Gastrocnemius medialis (tissue), 4 donors: ENCODE measurements at regions of chr15 and their contacts with region 1.

Region 1: GRCh38 chr15:58182460-58183163 is 44.4 kb downstream of the AQP9 start:
- DNase-seq: no peak
- ATAC-seq: no peak
- H3K4me3 ChIP-seq: no peak overlapping the region
- H3K27ac ChIP-seq: no peak overlapping the region
- H3K4me1 ChIP-seq: no peaks in the 10 kb centered on the region
- H3K27me3 ChIP-seq: no peaks in the 10 kb centered on the region
- CTCF ChIP-seq: peak in 4 of 5 experiments; percentile 22 to 61 (median 40)
- POLR2A ChIP-seq: no peak

Region 2: DNA sequence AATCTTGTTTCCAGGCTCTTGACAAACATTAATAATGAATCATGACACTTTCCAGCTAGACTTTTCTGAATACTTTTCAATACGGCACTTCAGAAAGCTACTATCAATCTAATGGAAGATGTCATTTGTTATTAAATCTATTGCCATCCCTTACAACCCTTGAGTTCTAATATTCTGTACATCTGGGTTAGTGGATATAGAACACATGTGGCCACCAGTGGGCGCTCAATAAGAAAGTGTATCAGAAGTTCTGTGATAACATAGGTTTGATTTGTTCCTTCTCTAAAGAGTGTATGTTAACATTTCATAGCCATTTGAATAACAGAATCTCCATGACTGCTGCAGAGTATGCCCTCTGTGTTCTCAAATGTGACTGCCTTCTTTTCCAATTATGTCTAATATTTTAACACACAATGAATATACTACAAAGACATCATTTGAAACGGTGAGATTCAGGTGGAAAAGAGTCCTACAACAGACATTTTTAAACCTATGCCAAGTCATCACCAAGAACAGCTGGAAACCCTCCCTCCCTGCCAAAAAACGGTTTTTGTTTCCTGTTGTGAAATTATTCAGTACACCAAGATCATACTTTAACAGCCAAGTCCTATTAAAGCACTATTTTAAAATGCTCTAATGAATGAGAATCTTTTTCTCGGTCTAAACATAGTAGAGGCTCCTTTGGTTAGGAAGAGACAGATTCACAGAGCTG is 139.3 kb before region 1 on chr15:
- in situ Hi-C with region 1: loop called in 1 of 4 experiments (anchors 25 kb)
- intact Hi-C with region 1: no loop called
- DNase-seq: no peak
- ATAC-seq: no peak
- H3K4me3 ChIP-seq: no peak overlapping the region
- H3K27ac ChIP-seq: no peak overlapping the region
- H3K4me1 ChIP-seq: no peaks in the 10 kb centered on the region
- H3K27me3 ChIP-seq: peaks cover 0 to 3% (median 0%) of the 10 kb centered on the region in 3 donors
- CTCF ChIP-seq: peak in 3 of 5 experiments; percentile 31 to 54 (median 34)
- POLR2A ChIP-seq: no peak

Region 3: DNA sequence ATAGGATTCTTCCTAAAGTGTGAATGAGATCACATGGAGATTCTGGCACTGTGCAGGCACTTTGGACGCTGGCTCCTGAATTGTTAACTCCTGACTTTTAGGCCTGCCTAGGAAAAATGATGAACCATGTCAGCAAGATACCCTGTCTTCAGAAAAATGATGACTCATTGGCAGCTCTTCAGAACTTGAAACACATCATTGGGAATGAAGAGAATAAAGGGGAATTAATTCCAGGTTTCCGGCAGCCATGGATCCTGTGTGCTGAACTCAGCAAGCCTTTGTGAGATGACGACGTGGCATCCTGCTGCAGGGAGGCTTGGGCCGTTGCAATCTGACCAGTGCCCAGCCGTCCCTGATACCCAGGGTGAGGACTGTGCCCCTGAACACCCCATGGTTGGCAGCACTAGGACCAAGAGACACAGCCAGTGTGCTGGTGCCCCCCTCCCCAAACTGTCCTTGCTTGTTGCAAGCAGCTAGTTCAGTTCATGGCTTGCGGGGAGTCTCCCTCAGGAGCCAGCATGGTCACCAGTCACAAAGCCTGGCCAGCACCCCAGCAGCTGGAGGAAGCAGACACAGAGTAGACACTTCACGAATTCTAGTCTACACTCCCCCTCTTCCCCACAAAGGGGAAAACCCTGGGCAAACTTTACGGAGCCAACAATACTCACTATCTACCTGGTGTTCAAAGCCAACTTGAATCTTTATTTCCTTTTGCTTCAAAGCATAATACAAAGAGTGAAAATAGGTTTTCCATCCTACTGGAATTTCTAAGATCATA is 241.4 kb after region 1 on chr15:
- in situ Hi-C with region 1: no loop called
- intact Hi-C with region 1: no loop called
- DNase-seq: no peak
- ATAC-seq: no peak
- H3K4me3 ChIP-seq: no peak overlapping the region
- H3K27ac ChIP-seq: no peak overlapping the region
- H3K4me1 ChIP-seq: no peaks in the 10 kb centered on the region
- H3K27me3 ChIP-seq: no peaks in the 10 kb centered on the region
- CTCF ChIP-seq: no peak
- POLR2A ChIP-seq: no peak